CD8-positive, alpha-beta T cell (primary cell): ENCODE measurements at regions of chr14 and their contacts with region 1.

Region 1: DNA sequence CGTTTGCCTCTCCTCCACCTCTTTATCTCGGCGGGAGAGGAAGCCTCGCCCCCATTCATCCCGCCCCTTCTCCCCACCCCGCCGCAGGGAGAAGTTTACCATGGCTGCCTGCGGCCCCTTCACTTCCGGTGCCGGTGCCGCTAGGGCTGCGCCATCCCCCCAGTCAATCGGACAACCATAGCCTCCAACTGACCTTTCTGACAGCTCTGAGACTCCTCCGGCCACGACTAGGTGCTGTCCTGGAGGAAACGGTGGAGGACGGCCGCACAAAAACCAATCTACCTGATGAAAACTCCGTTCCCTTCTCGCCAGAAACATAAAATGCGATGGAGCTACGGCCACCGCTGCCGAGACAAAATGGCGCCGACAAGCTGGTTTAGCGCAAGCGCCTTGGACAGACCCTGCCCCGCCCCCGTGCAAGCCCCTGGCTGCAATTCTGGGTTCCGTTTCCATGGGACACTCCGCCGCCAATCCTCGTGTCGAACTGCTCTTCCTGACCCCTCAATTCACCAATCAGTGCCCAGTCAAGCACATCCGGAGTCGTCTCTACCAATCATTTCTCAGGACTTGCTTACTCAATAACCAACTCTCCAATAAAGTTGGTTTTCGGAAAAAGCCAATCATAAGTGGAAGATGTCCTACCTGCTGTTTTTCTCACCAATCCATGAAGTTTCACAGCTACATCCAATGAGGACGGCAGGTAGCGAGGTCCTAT is 436 bp upstream of the ARID4A start:
- DNase-seq: peak; percentile 96 to 100 (median 97)
- ATAC-seq: peak; percentile 85
- H3K4me3 ChIP-seq: peak overlapping the region; percentile 81 to 85
- H3K4me3 Mint-ChIP-seq: no peak overlapping the region
- H3K27ac ChIP-seq: peak overlapping the region; percentile 94 to 97
- H3K27ac Mint-ChIP-seq: no peak overlapping the region
- H3K4me1 ChIP-seq: peaks cover 40% of the 10 kb centered on the region
- H3K4me1 Mint-ChIP-seq: peaks cover 61% of the 10 kb centered on the region
- H3K27me3 ChIP-seq: no peaks in the 10 kb centered on the region
- H3K27me3 Mint-ChIP-seq: no peaks in the 10 kb centered on the region
- CTCF ChIP-seq: no peak

Region 2: DNA sequence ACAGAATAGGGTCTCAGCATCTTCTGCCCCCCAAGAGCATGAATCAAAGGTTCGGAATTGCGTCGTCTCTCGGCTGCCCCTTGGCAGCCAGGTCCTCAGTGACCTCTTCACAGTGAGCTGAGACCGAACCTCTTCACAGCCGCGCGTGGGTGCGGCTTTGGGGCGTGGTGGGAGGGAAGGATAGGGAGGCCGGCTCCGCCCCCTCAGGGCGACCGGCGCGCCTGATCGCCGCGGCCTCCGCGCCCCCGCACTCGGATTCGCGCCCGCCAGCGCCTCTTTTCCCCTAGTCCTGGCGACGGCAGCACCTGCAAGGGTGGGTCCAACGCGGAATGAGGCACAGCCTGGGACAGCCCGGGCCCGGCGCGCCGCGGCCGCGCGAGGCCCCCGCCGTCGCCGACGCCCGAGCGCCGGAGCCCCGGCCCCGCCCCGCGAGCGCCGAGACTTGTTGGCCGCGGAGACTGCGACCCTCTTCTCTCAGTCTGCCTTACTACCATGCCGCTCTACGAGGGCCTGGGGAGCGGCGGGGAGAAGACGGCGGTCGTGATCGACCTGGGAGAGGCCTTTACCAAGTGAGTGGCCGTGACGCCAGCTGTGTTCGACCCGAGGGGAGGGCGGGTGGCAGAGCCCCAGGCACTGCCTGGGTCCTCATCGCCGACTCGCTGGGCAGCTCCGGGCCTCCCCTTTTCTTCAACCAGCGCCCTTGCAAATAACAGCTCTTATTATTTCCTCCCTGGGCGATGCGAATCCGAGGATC is 98.0 kb before region 1 on chr14 and contains the start of gene ACTR10:
- CTCF ChIA-PET with region 1: no interaction called
- POLR2A ChIA-PET with region 1: interaction called, 16 read pairs
- intact Hi-C with region 1: loop called (anchors 1 to 2 kb)
- DNase-seq: peak; percentile 76 to 95 (median 85)
- ATAC-seq: peak; percentile 87
- H3K4me3 ChIP-seq: peak within 1 kb of the TSS; percentile 75 to 92
- H3K4me3 Mint-ChIP-seq: peak within 1 kb of the TSS; percentile 94
- H3K27ac ChIP-seq: peak within 1 kb of the TSS; percentile 86 to 87
- H3K27ac Mint-ChIP-seq: peak within 1 kb of the TSS; percentile 98
- H3K4me1 ChIP-seq: peaks cover 25% of the 10 kb centered on the region
- H3K4me1 Mint-ChIP-seq: peaks cover 46% of the 10 kb centered on the region
- H3K27me3 ChIP-seq: no peaks in the 10 kb centered on the region
- H3K27me3 Mint-ChIP-seq: no peaks in the 10 kb centered on the region
- CTCF ChIP-seq: no peak
- total RNA-seq, gene ACTR10: 47.5 to 47.7 TPM

Region 3: DNA sequence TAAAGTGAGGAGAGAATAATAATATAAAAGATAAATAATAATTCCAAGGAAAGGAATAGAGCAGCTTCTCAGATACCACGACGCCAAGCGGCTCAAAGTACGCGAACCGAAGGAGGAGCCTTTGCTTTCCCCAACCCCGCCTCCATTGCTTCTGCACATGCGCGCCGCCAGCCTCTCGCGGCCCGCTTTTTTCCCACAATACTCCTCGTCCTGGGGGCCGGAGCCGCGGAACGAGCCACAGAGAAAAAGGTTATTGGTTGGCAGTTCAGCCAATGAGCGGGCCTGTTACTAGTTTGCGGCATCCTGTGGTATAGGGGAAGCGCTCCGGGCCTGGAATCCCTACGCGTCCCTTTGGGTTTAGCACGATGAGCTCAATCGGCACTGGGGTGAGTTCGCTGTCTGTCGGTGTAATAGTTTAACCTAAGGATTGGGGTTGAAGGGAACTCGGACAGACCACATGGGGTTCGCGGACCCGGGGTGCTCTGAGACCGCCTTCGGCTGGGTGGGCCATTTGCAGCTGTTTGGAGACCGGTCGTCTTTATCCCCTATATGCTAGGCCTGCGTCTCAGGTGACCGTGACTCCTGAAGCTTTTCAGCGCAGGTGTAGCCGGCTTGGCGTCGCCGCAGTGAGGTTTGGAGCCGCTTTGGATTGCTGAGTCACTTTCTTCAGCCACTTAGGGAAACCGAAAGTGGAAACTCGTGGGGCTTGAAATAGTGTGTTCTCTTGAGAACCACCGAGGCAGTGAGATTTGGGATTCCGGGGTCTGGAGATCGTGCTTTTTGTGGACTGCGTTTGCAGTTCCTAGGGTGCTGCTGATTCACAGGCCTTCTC is 53.1 kb before region 1 on chr14 and contains the start of gene PSMA3:
- CTCF ChIA-PET with region 1: interaction called, 4 read pairs
- POLR2A ChIA-PET with region 1: interaction called, 47 read pairs
- intact Hi-C with region 1: loop called (anchors 1 kb)
- DNase-seq: peak; percentile 94 to 98 (median 98)
- ATAC-seq: peak; percentile 83
- H3K4me3 ChIP-seq: peak within 1 kb of the TSS; percentile 92 to 93
- H3K4me3 Mint-ChIP-seq: peak within 1 kb of the TSS; percentile 99
- H3K27ac ChIP-seq: peak within 1 kb of the TSS; percentile 91 to 96
- H3K27ac Mint-ChIP-seq: peak within 1 kb of the TSS; percentile 98
- H3K4me1 ChIP-seq: peaks cover 30% of the 10 kb centered on the region
- H3K4me1 Mint-ChIP-seq: peaks cover 49% of the 10 kb centered on the region
- H3K27me3 ChIP-seq: no peaks in the 10 kb centered on the region
- H3K27me3 Mint-ChIP-seq: no peaks in the 10 kb centered on the region
- CTCF ChIP-seq: no peak
- total RNA-seq, gene PSMA3: 105 to 106 TPM

Region 4: GRCh38 chr14:58280954-58281787 is 16.7 kb before region 1 on chr14:
- CTCF ChIA-PET with region 1: interaction called, 5 read pairs
- POLR2A ChIA-PET with region 1: interaction called, 11 read pairs
- intact Hi-C with region 1: loop called (anchors 1 to 2 kb)
- DNase-seq: peak in 5 of 9 experiments; percentile 25 to 68 (median 43)
- ATAC-seq: peak; percentile 81
- H3K4me3 ChIP-seq: no peak overlapping the region
- H3K4me3 Mint-ChIP-seq: peak overlapping the region; percentile 65
- H3K27ac ChIP-seq: peak overlapping the region; percentile 42 to 64
- H3K27ac Mint-ChIP-seq: peak overlapping the region; percentile 96
- H3K4me1 ChIP-seq: peaks cover 42% of the 10 kb centered on the region
- H3K4me1 Mint-ChIP-seq: peaks cover 68% of the 10 kb centered on the region
- H3K27me3 ChIP-seq: no peaks in the 10 kb centered on the region
- H3K27me3 Mint-ChIP-seq: no peaks in the 10 kb centered on the region
- CTCF ChIP-seq: no peak

Region 5: DNA sequence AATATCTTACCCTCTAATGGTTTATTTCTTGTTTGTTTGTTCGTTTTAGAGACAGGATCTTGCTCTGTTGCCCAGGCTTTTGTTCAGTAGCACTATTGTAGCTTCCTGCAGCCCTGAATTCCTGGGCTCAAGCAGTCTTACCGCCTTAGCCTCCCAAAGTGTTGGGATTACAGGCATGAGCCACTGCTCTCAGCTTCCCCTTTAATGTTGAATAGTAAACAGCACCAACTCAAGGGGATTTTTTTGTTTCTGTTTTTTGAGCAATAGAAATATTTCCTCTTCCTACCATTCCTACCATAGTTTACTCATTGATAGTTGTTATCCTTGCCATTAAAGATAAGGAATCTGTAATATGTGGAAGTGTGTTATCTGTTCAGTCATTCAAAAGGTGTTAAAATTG is 11.2 kb after region 1 on chr14:
- CTCF ChIA-PET with region 1: no interaction called
- POLR2A ChIA-PET with region 1: interaction called, 20 read pairs
- intact Hi-C with region 1: no loop called
- DNase-seq: no peak
- ATAC-seq: no peak
- H3K4me3 ChIP-seq: no peak overlapping the region
- H3K4me3 Mint-ChIP-seq: no peak overlapping the region
- H3K27ac ChIP-seq: no peak overlapping the region
- H3K27ac Mint-ChIP-seq: no peak overlapping the region
- H3K4me1 ChIP-seq: no peaks in the 10 kb centered on the region
- H3K4me1 Mint-ChIP-seq: peaks cover 24% of the 10 kb centered on the region
- H3K27me3 ChIP-seq: no peaks in the 10 kb centered on the region
- H3K27me3 Mint-ChIP-seq: no peaks in the 10 kb centered on the region
- CTCF ChIP-seq: no peak

Region 6: DNA sequence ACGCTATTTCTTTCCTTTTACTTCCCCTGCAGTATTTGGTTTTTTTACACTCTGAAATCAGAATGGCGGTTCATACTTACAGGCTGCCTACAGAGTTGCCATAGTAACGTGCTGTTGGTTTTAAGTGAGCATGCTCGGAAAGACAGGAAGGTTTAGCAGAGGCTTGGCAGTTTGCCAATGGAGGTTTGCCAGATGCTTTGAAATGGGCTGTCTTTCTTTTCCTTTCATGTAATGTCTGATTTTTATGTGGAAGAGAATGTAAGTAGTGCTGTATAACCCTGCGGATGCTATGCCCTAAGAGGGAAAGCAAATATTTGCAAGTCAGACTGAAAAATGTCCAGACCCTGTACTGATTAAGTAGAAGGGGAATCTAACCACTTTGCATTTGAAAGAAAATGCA is 33.2 kb after region 1 on chr14:
- CTCF ChIA-PET with region 1: interaction called, 5 read pairs
- POLR2A ChIA-PET with region 1: interaction called, 10 read pairs
- intact Hi-C with region 1: loop called (anchors 1 kb)
- DNase-seq: peak; percentile 78 to 99 (median 92)
- ATAC-seq: peak; percentile 97
- H3K4me3 ChIP-seq: no peak overlapping the region
- H3K4me3 Mint-ChIP-seq: peak overlapping the region; percentile 30
- H3K27ac ChIP-seq: peak overlapping the region; percentile 51 to 63
- H3K27ac Mint-ChIP-seq: peak overlapping the region; percentile 89
- H3K4me1 ChIP-seq: peaks cover 10% of the 10 kb centered on the region
- H3K4me1 Mint-ChIP-seq: peaks cover 24% of the 10 kb centered on the region
- H3K27me3 ChIP-seq: no peaks in the 10 kb centered on the region
- H3K27me3 Mint-ChIP-seq: no peaks in the 10 kb centered on the region
- CTCF ChIP-seq: no peak

Region 7: DNA sequence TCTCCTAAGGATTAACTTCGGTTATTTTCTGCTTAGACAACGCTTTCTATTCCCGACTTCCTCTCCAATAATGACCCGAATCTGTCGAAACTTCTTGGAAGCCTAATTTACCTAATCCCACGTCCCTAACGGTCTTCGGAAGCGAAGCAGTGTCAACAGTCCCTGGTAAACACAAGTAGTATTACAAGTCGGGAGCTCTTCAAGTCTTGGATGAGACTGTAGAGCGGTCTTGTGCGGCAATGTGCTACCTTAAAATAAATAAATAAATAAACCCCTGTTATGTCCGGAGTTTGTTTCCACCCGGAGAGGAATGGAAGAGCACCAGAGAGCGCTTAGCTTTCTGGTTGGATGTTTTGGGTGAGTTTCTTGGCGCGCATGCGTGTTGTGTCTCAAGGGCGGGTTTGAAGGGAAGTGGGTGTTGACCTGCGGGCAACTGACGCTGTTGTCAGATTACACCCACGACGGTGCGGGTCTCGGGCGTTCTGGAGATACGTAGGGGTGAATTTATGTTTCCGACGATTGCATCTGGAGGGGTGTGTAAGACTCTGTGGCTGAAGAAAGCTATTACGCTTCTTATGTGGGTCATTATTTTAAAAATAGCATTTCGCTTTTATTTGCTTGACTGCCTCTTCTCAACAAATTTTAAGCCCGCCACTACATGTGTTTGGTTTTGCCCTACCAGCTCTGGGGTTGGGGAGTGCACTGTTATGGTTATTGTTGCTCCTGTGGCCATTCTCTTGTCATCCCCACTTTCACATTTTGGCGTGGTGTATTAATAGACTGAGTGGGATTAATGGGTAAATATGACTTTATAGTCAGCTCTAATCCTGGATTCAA is 129.6 kb after region 1 on chr14 and contains the starts of genes KIAA0586 and TIMM9:
- CTCF ChIA-PET with region 1: no interaction called
- POLR2A ChIA-PET with region 1: interaction called, 27 read pairs
- intact Hi-C with region 1: loop called in 1 of 2 experiments (anchors 2 kb)
- DNase-seq: peak; percentile 93 to 99 (median 94)
- ATAC-seq: peak; percentile 91
- H3K4me3 ChIP-seq: peak within 1 kb of the TSS; percentile 91 to 94
- H3K4me3 Mint-ChIP-seq: peak within 1 kb of the TSS; percentile 95
- H3K27ac ChIP-seq: peak within 1 kb of the TSS; percentile 96 to 98
- H3K27ac Mint-ChIP-seq: peak within 1 kb of the TSS; percentile 99
- H3K4me1 ChIP-seq: peaks cover 26% of the 10 kb centered on the region
- H3K4me1 Mint-ChIP-seq: peaks cover 50% of the 10 kb centered on the region
- H3K27me3 ChIP-seq: no peaks in the 10 kb centered on the region
- H3K27me3 Mint-ChIP-seq: no peaks in the 10 kb centered on the region
- CTCF ChIP-seq: no peak
- total RNA-seq, gene KIAA0586: 15.4 to 15.9 TPM
- total RNA-seq, gene TIMM9: 28.1 to 37.5 TPM